B cell (primary cell): ENCODE measurements at regions of chr21 and their contacts with region 1.

Region 1: DNA sequence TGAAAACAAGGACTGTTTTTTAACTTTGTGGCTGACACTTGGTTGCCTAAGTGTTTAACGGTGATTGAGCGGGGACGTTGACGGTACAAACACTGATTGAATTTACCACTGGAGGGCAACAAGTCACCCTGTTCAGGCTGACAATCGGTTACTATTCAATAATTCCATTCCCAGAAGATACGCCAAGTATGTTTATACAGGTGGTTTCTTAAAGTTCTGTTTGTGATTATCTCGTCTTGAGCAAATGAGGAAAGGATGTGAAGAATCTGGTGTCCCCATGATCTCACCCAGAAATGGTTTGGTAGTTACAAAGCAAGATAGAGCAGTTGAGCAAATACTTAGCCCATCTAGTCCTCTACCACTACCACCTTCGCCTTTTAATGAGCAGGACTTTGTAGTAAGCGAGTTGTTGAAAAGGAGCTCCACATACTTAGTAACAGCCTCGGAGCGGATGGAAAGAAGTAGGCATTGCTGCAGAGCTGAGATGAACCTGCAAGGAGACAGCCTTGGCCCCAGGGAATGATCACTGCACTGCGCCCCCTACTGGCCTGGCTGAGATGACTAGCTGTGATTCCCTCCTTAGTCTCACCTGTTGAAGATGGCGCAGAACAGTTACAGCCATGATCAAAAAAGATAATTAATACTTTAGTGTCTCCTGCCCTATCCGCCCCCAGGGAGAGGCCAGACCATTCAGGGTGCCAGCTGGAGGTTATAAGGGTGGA is 36.3 kb downstream of the IFNAR1 start:
- DNase-seq: peak; percentile 89
- ATAC-seq: peak; percentile 79
- H3K4me3 ChIP-seq: peak overlapping the region; percentile 21 to 50 (median 49)
- H3K4me3 Mint-ChIP-seq: peak overlapping the region; percentile 89
- H3K27ac ChIP-seq: peak overlapping the region; percentile 81 to 93
- H3K27ac Mint-ChIP-seq: peak overlapping the region; percentile 96
- H3K4me1 ChIP-seq: peaks cover 37 to 41% of the 10 kb centered on the region in 2 donors
- H3K4me1 Mint-ChIP-seq: peaks cover 44% of the 10 kb centered on the region
- H3K27me3 ChIP-seq: no peaks in the 10 kb centered on the region
- H3K27me3 Mint-ChIP-seq: no peaks in the 10 kb centered on the region
- CTCF ChIP-seq: peak; percentile 90

Region 2: DNA sequence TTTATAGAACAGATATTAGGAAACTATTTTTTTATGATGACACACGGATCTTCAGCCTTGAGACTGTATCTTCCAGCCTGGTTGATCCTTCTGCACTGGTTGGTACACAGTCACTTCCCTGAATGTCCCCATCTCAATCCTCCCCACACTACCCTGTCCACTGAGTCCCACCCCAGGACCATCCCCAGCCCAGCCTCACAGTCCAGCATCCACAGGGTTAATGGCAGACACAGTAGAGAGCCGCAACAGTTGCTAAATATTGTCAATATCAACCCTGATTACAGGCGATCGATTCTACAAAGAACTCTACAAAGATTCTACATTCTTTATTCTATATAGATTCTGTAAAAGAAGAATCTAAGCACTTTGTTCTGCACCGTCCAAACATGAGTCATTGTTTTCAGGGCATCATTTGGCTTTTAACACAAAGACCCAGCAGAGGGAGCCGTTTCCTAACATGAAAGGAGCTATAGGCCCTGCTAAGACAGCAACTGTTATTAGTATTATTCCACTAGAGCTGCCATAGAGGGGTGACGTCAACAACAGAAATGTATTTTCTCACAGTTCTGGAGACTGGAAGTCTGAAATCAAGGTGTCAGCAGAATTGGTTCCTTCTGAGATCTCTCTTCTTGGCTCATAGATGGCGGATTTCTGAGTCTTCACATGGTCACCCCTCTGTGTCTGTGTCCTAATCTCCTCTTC is 161.4 kb before region 1 on chr21:
- CTCF ChIA-PET with region 1: interaction called, 37 read pairs
- POLR2A ChIA-PET with region 1: no interaction called
- intact Hi-C with region 1: loop called (anchors 2 kb)
- DNase-seq: peak; percentile 90
- ATAC-seq: peak; percentile 94
- H3K4me3 ChIP-seq: no peak overlapping the region
- H3K4me3 Mint-ChIP-seq: no peak overlapping the region
- H3K27ac ChIP-seq: peak overlapping the region in 1 of 2 donors; percentile 39
- H3K27ac Mint-ChIP-seq: peak overlapping the region; percentile 51
- H3K4me1 ChIP-seq: peaks cover 20 to 25% of the 10 kb centered on the region in 2 donors
- H3K4me1 Mint-ChIP-seq: peaks cover 30% of the 10 kb centered on the region
- H3K27me3 ChIP-seq: no peaks in the 10 kb centered on the region
- H3K27me3 Mint-ChIP-seq: peaks cover 15% of the 10 kb centered on the region
- CTCF ChIP-seq: peak; percentile 86

Region 3: GRCh38 chr21:33324291-33325221 is 36.5 kb before region 1 on chr21 and contains the start of gene IFNAR1:
- CTCF ChIA-PET with region 1: interaction called, 36 read pairs
- POLR2A ChIA-PET with region 1: interaction called, 25 read pairs
- intact Hi-C with region 1: loop called (anchors 1 kb)
- DNase-seq: peak; percentile 99
- ATAC-seq: peak; percentile 81
- H3K4me3 ChIP-seq: peak within 1 kb of the TSS; percentile 83 to 98 (median 97)
- H3K4me3 Mint-ChIP-seq: no peak within 1 kb of the TSS
- H3K27ac ChIP-seq: peak within 1 kb of the TSS; percentile 91 to 97
- H3K27ac Mint-ChIP-seq: no peak within 1 kb of the TSS
- H3K4me1 ChIP-seq: peaks cover 28 to 35% of the 10 kb centered on the region in 2 donors
- H3K4me1 Mint-ChIP-seq: peaks cover 30% of the 10 kb centered on the region
- H3K27me3 ChIP-seq: no peaks in the 10 kb centered on the region
- H3K27me3 Mint-ChIP-seq: no peaks in the 10 kb centered on the region
- CTCF ChIP-seq: no peak
- total RNA-seq, gene IFNAR1: 55.7 and 57.7 TPM in 2 replicates

Region 4: GRCh38 chr21:33374450-33375096 is 13.5 kb after region 1 on chr21:
- CTCF ChIA-PET with region 1: interaction called, 93 read pairs
- POLR2A ChIA-PET with region 1: interaction called, 36 read pairs
- intact Hi-C with region 1: loop called (anchors 1 kb)
- DNase-seq: peak; percentile 82
- ATAC-seq: peak; percentile 79
- H3K4me3 ChIP-seq: peak overlapping the region; percentile 7 to 33 (median 26)
- H3K4me3 Mint-ChIP-seq: peak overlapping the region; percentile 76
- H3K27ac ChIP-seq: peak overlapping the region; percentile 76 to 87
- H3K27ac Mint-ChIP-seq: peak overlapping the region; percentile 89
- H3K4me1 ChIP-seq: peaks cover 83 to 91% of the 10 kb centered on the region in 2 donors
- H3K4me1 Mint-ChIP-seq: peaks cover 72% of the 10 kb centered on the region
- H3K27me3 ChIP-seq: no peaks in the 10 kb centered on the region
- H3K27me3 Mint-ChIP-seq: no peaks in the 10 kb centered on the region
- CTCF ChIP-seq: peak; percentile 51

Region 5: DNA sequence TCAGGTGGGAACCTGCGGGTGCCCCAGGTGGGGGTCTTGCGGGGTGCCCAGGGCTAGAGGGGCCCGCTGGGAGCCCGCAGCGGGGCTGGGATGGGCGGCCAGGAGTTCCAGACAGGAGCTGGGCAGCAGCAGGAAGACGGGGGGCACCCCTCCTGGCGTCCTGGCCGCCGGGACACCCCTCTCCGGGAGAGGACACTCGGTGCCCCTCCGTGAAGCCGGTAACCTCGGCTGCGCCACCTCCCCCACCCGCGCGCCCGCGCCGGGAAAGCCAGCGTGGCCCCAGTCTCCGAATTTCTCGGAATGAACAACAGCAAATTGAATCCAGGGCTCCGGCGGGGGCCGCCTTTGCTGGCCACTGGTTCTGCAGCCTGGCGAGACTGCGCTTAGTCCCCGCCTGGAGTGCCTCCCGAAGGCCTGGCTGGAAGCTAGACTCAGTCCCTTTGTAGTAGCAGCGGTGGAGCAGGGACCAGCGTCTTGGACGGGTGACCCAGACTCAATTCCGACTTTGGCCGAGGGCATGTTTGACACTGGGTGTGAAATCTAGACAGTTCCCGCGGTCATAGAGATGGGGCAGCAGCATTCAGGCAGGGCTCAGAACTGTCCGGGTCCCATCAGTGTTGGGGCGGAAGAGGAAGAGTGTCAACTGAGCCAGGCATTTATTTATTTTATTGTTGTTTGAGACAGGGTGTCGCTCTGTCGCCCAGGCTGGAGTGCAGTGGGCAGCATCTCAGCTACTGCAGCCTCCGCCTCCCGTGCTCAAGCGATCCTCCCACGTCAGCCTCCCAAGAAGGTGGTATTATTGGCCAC is 42.9 kb after region 1 on chr21:
- CTCF ChIA-PET with region 1: interaction called, 109 read pairs
- POLR2A ChIA-PET with region 1: interaction called, 39 read pairs
- intact Hi-C with region 1: loop called (anchors 1 kb)
- DNase-seq: peak; percentile 67
- ATAC-seq: peak; percentile 39
- H3K4me3 ChIP-seq: peak overlapping the region; percentile 85 to 94 (median 91)
- H3K4me3 Mint-ChIP-seq: peak overlapping the region; percentile 100
- H3K27ac ChIP-seq: peak overlapping the region; percentile 75 to 83
- H3K27ac Mint-ChIP-seq: peak overlapping the region; percentile 99
- H3K4me1 ChIP-seq: peaks cover 59 to 81% of the 10 kb centered on the region in 2 donors
- H3K4me1 Mint-ChIP-seq: peaks cover 71% of the 10 kb centered on the region
- H3K27me3 ChIP-seq: no peaks in the 10 kb centered on the region
- H3K27me3 Mint-ChIP-seq: no peaks in the 10 kb centered on the region
- CTCF ChIP-seq: no peak

Region 6: DNA sequence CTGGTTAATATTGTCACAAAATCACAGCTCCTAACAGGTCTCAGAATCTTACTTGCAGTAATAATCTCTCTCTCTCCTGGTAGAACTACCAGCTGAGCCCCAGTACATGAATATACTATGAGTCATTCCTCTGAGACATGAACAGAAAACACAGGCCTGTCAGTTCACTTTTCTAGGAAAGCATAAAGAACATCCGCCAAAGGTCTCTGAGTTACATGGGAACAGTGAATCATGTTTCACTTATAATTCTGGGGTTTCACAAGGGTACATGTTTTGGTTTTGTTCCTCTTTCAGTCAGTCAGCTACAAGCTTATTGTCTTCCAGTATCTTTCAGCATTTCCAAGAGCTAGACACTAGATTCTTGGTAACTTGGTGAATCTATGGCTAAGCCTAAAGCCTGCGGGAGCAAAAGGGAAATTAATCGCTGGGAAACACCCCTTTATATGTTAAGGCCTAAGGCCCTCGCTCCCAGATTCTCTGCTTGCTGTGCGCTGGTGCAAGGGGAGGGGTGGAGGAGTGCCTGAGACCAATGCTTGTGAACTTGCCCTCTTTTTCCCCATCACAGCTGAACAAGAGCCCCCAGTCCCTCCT is 73.8 kb after region 1 on chr21:
- CTCF ChIA-PET with region 1: interaction called, 265 read pairs
- POLR2A ChIA-PET with region 1: interaction called, 15 read pairs
- intact Hi-C with region 1: no loop called
- DNase-seq: peak; percentile 54
- ATAC-seq: peak; percentile 87
- H3K4me3 ChIP-seq: no peak overlapping the region
- H3K4me3 Mint-ChIP-seq: peak overlapping the region; percentile 68
- H3K27ac ChIP-seq: peak overlapping the region; percentile 51 to 76
- H3K27ac Mint-ChIP-seq: peak overlapping the region; percentile 88
- H3K4me1 ChIP-seq: peaks cover 33 to 48% of the 10 kb centered on the region in 2 donors
- H3K4me1 Mint-ChIP-seq: peaks cover 46% of the 10 kb centered on the region
- H3K27me3 ChIP-seq: no peaks in the 10 kb centered on the region
- H3K27me3 Mint-ChIP-seq: no peaks in the 10 kb centered on the region
- CTCF ChIP-seq: no peak